Psoas muscle (tissue), 8 donors: ENCODE measurements at regions of chr7 and their contacts with region 1.

Region 1: DNA sequence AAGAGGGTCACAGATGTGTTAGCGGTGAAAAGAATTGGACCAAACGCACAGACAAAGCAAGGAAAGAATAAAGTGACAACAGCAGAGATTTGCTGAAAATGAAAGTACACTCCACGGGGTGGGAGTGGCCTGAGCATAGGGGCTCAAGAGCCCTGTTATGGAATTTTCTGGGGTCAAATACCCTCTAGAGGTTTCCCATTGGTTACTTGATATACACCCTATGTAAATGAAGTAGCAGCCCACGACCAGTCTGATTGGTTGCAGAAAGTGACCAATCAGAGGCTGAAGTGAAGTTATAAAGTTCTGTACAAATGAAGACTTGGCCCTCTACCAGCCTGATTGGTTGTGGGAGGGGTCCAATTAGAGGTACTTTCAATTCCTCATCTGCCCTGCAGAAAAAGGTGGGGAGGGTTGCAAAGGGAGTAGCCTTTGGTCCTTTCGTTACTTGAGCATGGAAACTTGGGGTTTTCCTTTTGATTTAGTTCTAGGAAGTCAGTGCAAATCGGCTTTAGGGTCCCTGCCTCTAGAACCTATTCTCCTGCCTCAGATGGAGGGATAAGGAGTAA is 125.6 kb upstream of the PRPS1L1 start:
- DNase-seq: no peak
- ATAC-seq: no peak
- H3K4me3 ChIP-seq: no peak overlapping the region
- H3K27ac ChIP-seq: no peak overlapping the region
- H3K4me1 ChIP-seq: no peaks in the 10 kb centered on the region
- H3K27me3 ChIP-seq: no peaks in the 10 kb centered on the region
- CTCF ChIP-seq: no peak

Region 2: GRCh38 chr7:18132811-18133210 is 20.5 kb before region 1 on chr7:
- intact Hi-C with region 1: loop called in 1 of 2 experiments (anchors 1 kb)
- DNase-seq: no peak
- ATAC-seq: no peak
- H3K4me3 ChIP-seq: no peak overlapping the region
- H3K27ac ChIP-seq: no peak overlapping the region
- H3K4me1 ChIP-seq: no peaks in the 10 kb centered on the region
- H3K27me3 ChIP-seq: no peaks in the 10 kb centered on the region
- CTCF ChIP-seq: no peak

Region 3: GRCh38 chr7:18239212-18239611 is 85.9 kb after region 1 on chr7:
- intact Hi-C with region 1: no loop called
- DNase-seq: no peak
- ATAC-seq: no peak
- H3K4me3 ChIP-seq: no peak overlapping the region
- H3K27ac ChIP-seq: no peak overlapping the region
- H3K4me1 ChIP-seq: no peaks in the 10 kb centered on the region
- H3K27me3 ChIP-seq: peaks cover 0 to 3% (median 0%) of the 10 kb centered on the region in 3 donors
- CTCF ChIP-seq: no peak